CD14-positive monocyte (primary cell): ENCODE measurements at regions of chr16 and their contacts with region 1.

Region 1: GRCh38 chr16:82229796-82230619 is 60.0 kb upstream of the MPHOSPH6 start:
- DNase-seq: peak; percentile 47 to 81 (median 75)
- H3K4me3 ChIP-seq: no peak overlapping the region
- H3K4me3 Mint-ChIP-seq: no peak overlapping the region
- H3K27ac ChIP-seq: no peak overlapping the region
- H3K27ac Mint-ChIP-seq: peak overlapping the region in 2 of 7 donors; percentile 15 to 27
- H3K4me1 ChIP-seq: no peaks in the 10 kb centered on the region
- H3K4me1 Mint-ChIP-seq: peaks cover 2% of the 10 kb centered on the region
- H3K27me3 ChIP-seq: peaks cover 0 to 4% of the 10 kb centered on the region in 2 donors
- H3K27me3 Mint-ChIP-seq: peaks cover 7 to 15% (median 10%) of the 10 kb centered on the region in 3 donors
- CTCF ChIP-seq: peak; percentile 98

Region 2: GRCh38 chr16:81885976-81886586 is 343.9 kb before region 1 on chr16:
- intact Hi-C with region 1: no loop called
- DNase-seq: peak; percentile 8 to 33 (median 18)
- H3K4me3 ChIP-seq: no peak overlapping the region
- H3K4me3 Mint-ChIP-seq: no peak overlapping the region
- H3K27ac ChIP-seq: no peak overlapping the region
- H3K27ac Mint-ChIP-seq: no peak overlapping the region
- H3K4me1 ChIP-seq: no peaks in the 10 kb centered on the region
- H3K4me1 Mint-ChIP-seq: no peaks in the 10 kb centered on the region
- H3K27me3 ChIP-seq: no peaks in the 10 kb centered on the region
- H3K27me3 Mint-ChIP-seq: no peaks in the 10 kb centered on the region
- CTCF ChIP-seq: peak; percentile 82

Region 3: DNA sequence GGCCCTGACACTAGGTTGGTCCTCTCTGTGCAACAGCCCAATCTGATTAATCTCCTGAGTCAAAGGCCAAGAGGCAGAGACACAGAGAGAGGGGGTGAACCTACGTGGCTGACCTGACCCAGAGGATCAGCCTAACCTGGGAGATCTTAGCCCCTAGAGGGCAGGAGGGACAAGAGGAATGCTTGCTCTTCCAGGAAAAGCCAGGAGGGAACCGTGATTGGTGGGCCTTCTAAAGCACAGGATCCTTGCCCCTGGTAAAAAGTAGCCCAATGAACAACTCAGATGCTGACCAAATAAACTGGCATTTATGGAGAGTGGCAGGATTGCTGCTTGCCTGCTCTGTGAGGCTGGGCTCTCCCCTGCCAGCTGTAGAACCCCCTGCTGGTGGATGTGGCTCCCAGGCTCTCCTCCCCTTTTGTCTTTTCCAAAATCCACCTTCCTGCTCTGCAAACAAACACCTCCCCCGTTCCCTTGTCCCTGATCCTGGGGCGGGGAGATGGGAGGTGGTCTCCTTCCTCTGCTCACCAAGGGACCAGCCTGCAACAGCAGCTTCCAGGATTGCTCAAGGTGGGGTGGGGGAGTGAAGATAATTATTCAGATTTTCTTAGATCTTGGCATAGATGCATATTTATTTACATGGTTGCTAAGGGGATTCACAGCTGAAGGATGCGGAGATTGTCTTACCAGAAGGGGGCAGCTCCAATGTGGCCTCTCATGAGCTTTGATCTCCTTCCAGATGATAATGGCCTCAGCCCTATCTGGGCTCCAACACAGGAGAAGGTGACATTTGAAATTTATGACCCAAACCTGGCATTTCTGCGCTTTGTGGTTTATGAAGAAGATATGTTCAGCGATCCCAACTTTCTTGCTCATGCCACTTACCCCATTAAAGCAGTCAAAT is 290.6 kb before region 1 on chr16:
- intact Hi-C with region 1: loop called in 1 of 2 experiments (anchors 10 kb)
- DNase-seq: no peak
- H3K4me3 ChIP-seq: no peak overlapping the region
- H3K4me3 Mint-ChIP-seq: no peak overlapping the region
- H3K27ac ChIP-seq: peak overlapping the region in 1 of 2 donors; percentile 10
- H3K27ac Mint-ChIP-seq: peak overlapping the region in 4 of 7 donors; percentile 27 to 70 (median 39)
- H3K4me1 ChIP-seq: no peaks in the 10 kb centered on the region
- H3K4me1 Mint-ChIP-seq: peaks cover 4% of the 10 kb centered on the region
- H3K27me3 ChIP-seq: no peaks in the 10 kb centered on the region
- H3K27me3 Mint-ChIP-seq: no peaks in the 10 kb centered on the region
- CTCF ChIP-seq: no peak

Region 4: GRCh38 chr16:81946206-81946605 is 283.8 kb before region 1 on chr16:
- intact Hi-C with region 1: loop called in 1 of 2 experiments (anchors 5 kb)
- DNase-seq: no peak
- H3K4me3 ChIP-seq: no peak overlapping the region
- H3K4me3 Mint-ChIP-seq: no peak overlapping the region
- H3K27ac ChIP-seq: no peak overlapping the region
- H3K27ac Mint-ChIP-seq: no peak overlapping the region
- H3K4me1 ChIP-seq: no peaks in the 10 kb centered on the region
- H3K4me1 Mint-ChIP-seq: no peaks in the 10 kb centered on the region
- H3K27me3 ChIP-seq: no peaks in the 10 kb centered on the region
- H3K27me3 Mint-ChIP-seq: peaks cover 0 to 2% (median 0%) of the 10 kb centered on the region in 3 donors
- CTCF ChIP-seq: no peak

Region 5: GRCh38 chr16:82031116-82032084 is 198.6 kb before region 1 on chr16:
- intact Hi-C with region 1: loop called (anchors 5 kb)
- DNase-seq: peak; percentile 23 to 63 (median 57)
- H3K4me3 ChIP-seq: no peak overlapping the region
- H3K4me3 Mint-ChIP-seq: no peak overlapping the region
- H3K27ac ChIP-seq: no peak overlapping the region
- H3K27ac Mint-ChIP-seq: no peak overlapping the region
- H3K4me1 ChIP-seq: no peaks in the 10 kb centered on the region
- H3K4me1 Mint-ChIP-seq: no peaks in the 10 kb centered on the region
- H3K27me3 ChIP-seq: no peaks in the 10 kb centered on the region
- H3K27me3 Mint-ChIP-seq: peaks cover 0 to 10% (median 2%) of the 10 kb centered on the region in 3 donors
- CTCF ChIP-seq: peak; percentile 65

Region 6: GRCh38 chr16:82156761-82157532 is 73.1 kb before region 1 on chr16:
- intact Hi-C with region 1: no loop called
- DNase-seq: peak; percentile 7 to 26 (median 19)
- H3K4me3 ChIP-seq: no peak overlapping the region
- H3K4me3 Mint-ChIP-seq: no peak overlapping the region
- H3K27ac ChIP-seq: peak overlapping the region in 1 of 2 donors; percentile 39
- H3K27ac Mint-ChIP-seq: peak overlapping the region; percentile 61 to 90 (median 70)
- H3K4me1 ChIP-seq: peaks cover 4 to 6% of the 10 kb centered on the region in 2 donors
- H3K4me1 Mint-ChIP-seq: peaks cover 10% of the 10 kb centered on the region
- H3K27me3 ChIP-seq: no peaks in the 10 kb centered on the region
- H3K27me3 Mint-ChIP-seq: peaks cover 0 to 3% (median 0%) of the 10 kb centered on the region in 3 donors
- CTCF ChIP-seq: no peak

Region 7: GRCh38 chr16:82169861-82170845 is 59.9 kb before region 1 on chr16 and contains the start of gene MPHOSPH6:
- intact Hi-C with region 1: loop called in 1 of 2 experiments (anchors 10 kb)
- DNase-seq: peak; percentile 91 to 95 (median 93)
- H3K4me3 ChIP-seq: peak within 1 kb of the TSS; percentile 47 to 78 (median 69)
- H3K4me3 Mint-ChIP-seq: peak within 1 kb of the TSS; percentile 90 to 95
- H3K27ac ChIP-seq: peak within 1 kb of the TSS; percentile 89 to 91
- H3K27ac Mint-ChIP-seq: peak within 1 kb of the TSS; percentile 93 to 98 (median 97)
- H3K4me1 ChIP-seq: peaks cover 17% of the 10 kb centered on the region in 2 donors
- H3K4me1 Mint-ChIP-seq: peaks cover 23% of the 10 kb centered on the region
- H3K27me3 ChIP-seq: peaks cover 19 to 22% of the 10 kb centered on the region in 2 donors
- H3K27me3 Mint-ChIP-seq: peaks cover 22 to 29% (median 28%) of the 10 kb centered on the region in 3 donors
- CTCF ChIP-seq: no peak
- polyA plus RNA-seq, gene MPHOSPH6: 8.6 to 37.6 (median 20.2) TPM

Region 8: DNA sequence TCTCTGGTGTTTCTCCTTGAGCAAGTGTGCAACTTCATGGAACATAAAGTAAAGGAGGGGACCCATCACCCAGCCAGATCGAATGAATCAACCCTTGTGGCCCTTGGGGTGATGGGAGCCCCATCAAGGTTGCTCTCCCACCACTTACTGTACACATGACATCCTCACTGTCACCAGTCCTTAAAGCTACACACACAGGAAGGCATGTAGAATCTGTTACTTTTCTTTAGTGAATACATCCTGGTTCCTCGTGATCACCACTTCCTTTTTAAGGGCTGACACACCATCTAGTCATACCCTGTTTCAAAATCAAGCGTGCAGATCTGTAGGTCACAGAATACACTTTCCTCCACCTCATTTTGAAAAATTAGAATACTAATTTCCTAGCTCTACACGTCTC is 37.3 kb before region 1 on chr16:
- intact Hi-C with region 1: loop called in 1 of 2 experiments (anchors 5 kb)
- DNase-seq: peak; percentile 95 to 98 (median 98)
- H3K4me3 ChIP-seq: no peak overlapping the region
- H3K4me3 Mint-ChIP-seq: peak overlapping the region in 1 of 2 donors; percentile 77
- H3K27ac ChIP-seq: peak overlapping the region; percentile 82 to 97
- H3K27ac Mint-ChIP-seq: peak overlapping the region; percentile 97 to 100 (median 99)
- H3K4me1 ChIP-seq: peaks cover 77 to 80% of the 10 kb centered on the region in 2 donors
- H3K4me1 Mint-ChIP-seq: peaks cover 77% of the 10 kb centered on the region
- H3K27me3 ChIP-seq: no peaks in the 10 kb centered on the region
- H3K27me3 Mint-ChIP-seq: no peaks in the 10 kb centered on the region
- CTCF ChIP-seq: no peak

Region 9: DNA sequence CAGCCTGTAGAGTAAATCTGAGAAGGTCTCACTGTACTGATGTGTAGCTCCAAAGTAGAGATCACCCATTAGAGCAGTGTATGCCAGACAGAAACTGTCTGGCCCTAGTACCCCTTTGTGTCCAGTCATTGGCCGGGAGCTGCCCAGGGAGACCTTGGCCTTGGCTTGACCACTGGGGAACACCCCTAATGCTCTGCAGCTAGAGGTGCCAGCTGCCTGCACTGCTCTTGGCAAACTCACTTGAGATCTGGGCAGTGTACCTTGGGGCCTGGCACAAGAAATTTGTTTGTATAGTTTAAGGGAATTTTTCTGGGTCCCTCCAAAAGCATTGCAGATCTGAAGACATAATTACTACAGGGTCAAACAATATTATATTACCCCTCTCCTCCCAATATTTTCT is 18.7 kb after region 1 on chr16:
- intact Hi-C with region 1: no loop called
- DNase-seq: no peak
- H3K4me3 ChIP-seq: no peak overlapping the region
- H3K4me3 Mint-ChIP-seq: no peak overlapping the region
- H3K27ac ChIP-seq: no peak overlapping the region
- H3K27ac Mint-ChIP-seq: no peak overlapping the region
- H3K4me1 ChIP-seq: no peaks in the 10 kb centered on the region
- H3K4me1 Mint-ChIP-seq: no peaks in the 10 kb centered on the region
- H3K27me3 ChIP-seq: peaks cover 0 to 2% of the 10 kb centered on the region in 2 donors
- H3K27me3 Mint-ChIP-seq: peaks cover 2 to 10% (median 3%) of the 10 kb centered on the region in 3 donors
- CTCF ChIP-seq: no peak

Region 10: DNA sequence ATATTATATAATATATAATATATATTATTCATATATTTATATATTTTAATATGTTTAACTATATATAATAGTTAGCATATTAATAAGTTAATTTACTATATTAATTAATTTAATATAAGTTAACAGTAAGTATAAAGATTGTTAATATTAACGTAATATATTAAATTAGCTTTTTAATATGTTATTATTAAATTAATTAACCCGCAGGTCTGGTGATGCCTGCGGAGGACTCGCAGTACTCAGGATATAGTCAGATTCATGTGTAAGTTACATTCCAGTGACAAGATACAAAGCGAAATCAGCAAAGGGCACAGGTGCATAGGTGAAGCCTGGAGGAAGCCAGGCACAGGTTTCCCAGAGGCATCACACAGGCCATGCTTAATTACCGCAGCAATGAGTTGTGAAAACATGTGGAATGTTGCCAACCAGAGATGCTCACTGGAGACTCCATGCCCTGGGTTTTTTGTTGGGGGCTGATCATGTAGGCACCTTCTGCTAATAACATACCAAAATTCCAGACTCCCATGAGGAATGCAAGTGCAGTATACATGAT is 70.4 kb after region 1 on chr16:
- intact Hi-C with region 1: no loop called
- DNase-seq: no peak
- H3K4me3 ChIP-seq: no peak overlapping the region
- H3K4me3 Mint-ChIP-seq: no peak overlapping the region
- H3K27ac ChIP-seq: no peak overlapping the region
- H3K27ac Mint-ChIP-seq: no peak overlapping the region
- H3K4me1 ChIP-seq: no peaks in the 10 kb centered on the region
- H3K4me1 Mint-ChIP-seq: no peaks in the 10 kb centered on the region
- H3K27me3 ChIP-seq: no peaks in the 10 kb centered on the region
- H3K27me3 Mint-ChIP-seq: peaks cover 0 to 4% (median 2%) of the 10 kb centered on the region in 3 donors
- CTCF ChIP-seq: no peak